Breast epithelium (tissue), 4 donors: ENCODE measurements at regions of chr3 and their contacts with region 1.

Region 1: DNA sequence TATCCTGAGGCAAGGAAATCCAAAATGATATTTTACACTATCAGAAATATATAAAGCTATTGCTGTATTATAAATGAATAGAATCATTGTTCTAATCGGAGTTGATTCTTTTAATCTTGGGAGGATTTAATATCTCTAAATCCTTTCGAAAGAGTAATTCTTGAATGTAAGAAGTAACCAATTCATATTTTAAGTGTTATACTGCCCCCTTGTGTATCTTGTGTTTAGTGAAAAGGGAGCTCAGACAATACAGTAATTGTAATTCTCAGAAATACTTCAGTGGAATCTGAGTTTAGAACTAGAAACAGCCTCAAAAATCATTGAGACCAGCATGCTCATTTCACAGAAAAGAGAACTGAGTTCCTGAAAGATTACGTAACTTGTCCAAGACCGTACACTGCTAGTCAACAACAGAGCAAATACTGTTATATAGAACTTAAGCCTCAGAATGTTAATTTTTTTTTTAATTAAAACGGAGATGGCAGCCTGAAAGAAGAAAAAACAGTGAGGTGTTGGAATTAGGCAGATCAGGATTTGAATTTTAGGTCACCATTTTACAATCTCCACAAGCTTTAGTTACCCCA is 42.9 kb downstream of the PLCH1 start:
- DNase-seq: no peak
- H3K4me3 ChIP-seq: no peak overlapping the region
- H3K27ac ChIP-seq: no peak overlapping the region
- H3K4me1 ChIP-seq: no peaks in the 10 kb centered on the region
- H3K27me3 ChIP-seq: no peaks in the 10 kb centered on the region
- CTCF ChIP-seq: peak; percentile 52 to 82 (median 81)
- POLR2A ChIP-seq: no peak

Region 2: DNA sequence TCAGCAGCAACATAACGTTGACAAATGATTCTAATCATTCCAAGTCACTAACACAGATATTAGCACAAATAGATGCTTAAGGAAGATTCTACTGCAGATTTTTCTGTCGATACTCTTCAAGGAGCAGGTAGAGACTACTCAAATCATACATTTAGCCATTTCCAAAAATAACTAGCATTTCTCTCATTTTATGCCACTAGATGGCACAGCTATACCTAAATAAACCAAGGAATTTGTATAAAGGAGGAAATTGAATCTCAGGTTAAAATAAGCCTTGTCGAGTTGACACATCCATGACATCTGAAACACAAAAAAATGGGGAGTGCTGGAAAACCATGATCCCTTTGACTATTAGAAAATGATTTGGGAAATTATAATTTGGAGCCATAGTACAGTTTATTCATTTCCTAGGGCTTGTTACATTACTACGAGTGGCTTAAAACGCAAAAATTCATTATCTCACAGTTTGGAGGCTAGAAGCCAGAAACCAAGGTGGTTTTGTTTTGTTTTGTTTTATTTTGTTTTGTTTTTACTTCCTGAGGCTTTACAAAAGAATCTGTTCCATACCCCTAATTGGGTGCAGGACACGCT is 349.0 kb before region 1 on chr3:
- intact Hi-C with region 1: loop called (anchors 10 kb)
- DNase-seq: no peak
- H3K4me3 ChIP-seq: no peak overlapping the region
- H3K27ac ChIP-seq: no peak overlapping the region
- H3K4me1 ChIP-seq: no peaks in the 10 kb centered on the region
- H3K27me3 ChIP-seq: no peaks in the 10 kb centered on the region
- CTCF ChIP-seq: peak in 2 of 3 donors; percentile 48 to 58
- POLR2A ChIP-seq: no peak

Region 3: GRCh38 chr3:155737844-155738460 is 36.0 kb after region 1 on chr3:
- intact Hi-C with region 1: no loop called
- DNase-seq: no peak
- H3K4me3 ChIP-seq: no peak overlapping the region
- H3K27ac ChIP-seq: peak overlapping the region; percentile 20 to 52
- H3K4me1 ChIP-seq: no peaks in the 10 kb centered on the region
- H3K27me3 ChIP-seq: no peaks in the 10 kb centered on the region
- CTCF ChIP-seq: no peak
- POLR2A ChIP-seq: no peak

Region 4: DNA sequence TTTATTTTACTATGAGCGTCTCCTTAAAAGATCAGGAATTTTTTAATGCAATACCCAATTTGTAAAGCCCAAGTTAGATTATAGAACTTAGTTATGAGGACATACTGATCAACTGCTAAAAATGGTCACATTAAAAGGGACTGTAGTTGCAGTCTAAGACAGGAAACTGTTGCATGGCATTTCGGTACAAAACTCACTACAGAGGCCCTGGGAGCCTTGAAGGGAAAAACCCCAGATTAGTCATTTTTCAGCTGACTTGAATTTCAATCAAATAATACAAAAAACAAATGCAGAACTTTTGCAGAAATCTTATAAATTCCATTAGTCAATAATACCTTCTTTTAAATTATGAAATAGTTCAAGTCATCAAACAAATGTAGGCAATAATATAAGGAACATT is 1727.7 kb after region 1 on chr3:
- intact Hi-C with region 1: loop called (anchors 5 kb)
- DNase-seq: no peak
- H3K4me3 ChIP-seq: no peak overlapping the region
- H3K27ac ChIP-seq: no peak overlapping the region
- H3K4me1 ChIP-seq: no peaks in the 10 kb centered on the region
- H3K27me3 ChIP-seq: no peaks in the 10 kb centered on the region
- CTCF ChIP-seq: no peak
- POLR2A ChIP-seq: no peak